GM12878 (cell line): ENCODE measurements at regions of chr10 and their contacts with region 1.

Region 1: GRCh38 chr10:18539335-18539734 is 112.1 kb downstream of the NSUN6 start:
- DNase-seq: no peak
- ATAC-seq: no peak
- H3K4me3 ChIP-seq: no peak overlapping the region
- H3K27ac ChIP-seq: no peak overlapping the region
- H3K4me1 ChIP-seq: no peaks in the 10 kb centered on the region
- H3K27me3 ChIP-seq: no peaks in the 10 kb centered on the region
- CTCF ChIP-seq: no peak
- EP300 ChIP-seq: no peak
- POLR2A ChIP-seq: no peak
- RAD21 ChIP-seq: no peak

Region 2: DNA sequence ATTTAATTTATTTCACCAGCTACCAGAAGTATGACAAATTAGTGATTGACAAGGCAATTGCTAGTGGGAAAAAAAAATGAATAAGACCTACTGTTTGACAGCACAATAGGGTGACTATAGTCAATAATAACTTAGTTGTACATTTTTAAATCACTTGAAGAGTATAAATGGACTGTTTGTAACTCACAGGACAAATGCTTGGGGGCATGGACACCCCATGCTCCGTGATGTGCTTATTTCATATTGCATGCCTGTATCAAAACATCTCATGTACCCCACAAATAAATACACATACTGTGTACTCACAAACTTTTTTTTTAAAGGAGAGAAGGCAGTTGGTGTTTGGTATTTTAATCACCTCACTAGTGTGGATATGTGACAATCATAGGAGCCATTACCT is 218.0 kb before region 1 on chr10:
- CTCF ChIA-PET with region 1: no interaction called
- POLR2A ChIA-PET with region 1: no interaction called
- RAD21 ChIA-PET with region 1: no interaction called
- SMC1A ChIA-PET with region 1: no interaction called
- in situ Hi-C with region 1: no loop called
- intact Hi-C with region 1: no loop called
- DNase-seq: no peak
- ATAC-seq: no peak
- H3K4me3 ChIP-seq: no peak overlapping the region
- H3K27ac ChIP-seq: no peak overlapping the region
- H3K4me1 ChIP-seq: no peaks in the 10 kb centered on the region
- H3K27me3 ChIP-seq: no peaks in the 10 kb centered on the region
- CTCF ChIP-seq: no peak
- EP300 ChIP-seq: no peak
- POLR2A ChIP-seq: no peak
- RAD21 ChIP-seq: no peak

Region 3: DNA sequence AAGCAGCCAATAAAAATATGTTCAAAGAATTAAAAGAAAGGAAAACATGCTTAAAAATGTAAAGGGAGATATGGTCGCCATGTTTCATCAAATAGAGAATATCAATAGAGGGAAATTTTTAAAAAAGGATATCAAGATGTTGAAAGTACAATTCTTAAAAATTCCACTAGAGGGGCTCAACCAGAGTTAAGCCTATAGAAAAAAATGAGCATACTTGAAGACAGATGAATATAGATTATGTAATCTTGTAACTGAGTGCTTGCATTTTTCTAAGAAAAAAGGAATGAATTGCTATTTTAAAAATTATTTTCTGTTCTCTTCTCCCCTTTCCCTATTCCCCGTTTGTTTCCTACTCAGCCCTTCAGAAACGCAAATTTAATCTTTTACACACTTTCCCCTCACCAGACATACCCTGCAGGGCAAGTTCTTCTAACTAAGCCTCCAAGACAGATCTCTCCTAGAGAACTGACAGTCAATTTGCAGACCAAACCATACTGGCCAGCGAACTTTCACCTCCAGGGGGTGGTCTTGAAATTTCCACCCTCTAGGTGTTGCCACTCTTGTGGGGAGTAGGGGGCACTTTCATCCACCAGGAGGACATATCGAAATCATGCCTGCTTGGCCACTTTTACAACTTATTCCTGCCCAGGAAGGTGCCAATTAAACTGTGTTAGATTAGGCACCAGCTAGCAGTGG is 44.4 kb after region 1 on chr10:
- CTCF ChIA-PET with region 1: no interaction called
- POLR2A ChIA-PET with region 1: no interaction called
- RAD21 ChIA-PET with region 1: no interaction called
- SMC1A ChIA-PET with region 1: no interaction called
- in situ Hi-C with region 1: loop called (anchors 5 kb)
- intact Hi-C with region 1: no loop called
- DNase-seq: no peak
- ATAC-seq: peak; percentile 46; the same call in 2 of the 3 replicates
- H3K4me3 ChIP-seq: no peak overlapping the region
- H3K27ac ChIP-seq: no peak overlapping the region
- H3K4me1 ChIP-seq: no peaks in the 10 kb centered on the region
- H3K27me3 ChIP-seq: no peaks in the 10 kb centered on the region
- CTCF ChIP-seq: 0 out of 6 replicates have a peak, but pooled peaks of 1 of the 3 experiments have one; percentile 14
- EP300 ChIP-seq: no peak
- POLR2A ChIP-seq: no peak
- RAD21 ChIP-seq: 0 out of 2 replicates have a peak, but pooled peaks have one; percentile 3